HepG2 (cell line): ENCODE measurements at regions of chr6 and their contacts with region 1.

Region 1: DNA sequence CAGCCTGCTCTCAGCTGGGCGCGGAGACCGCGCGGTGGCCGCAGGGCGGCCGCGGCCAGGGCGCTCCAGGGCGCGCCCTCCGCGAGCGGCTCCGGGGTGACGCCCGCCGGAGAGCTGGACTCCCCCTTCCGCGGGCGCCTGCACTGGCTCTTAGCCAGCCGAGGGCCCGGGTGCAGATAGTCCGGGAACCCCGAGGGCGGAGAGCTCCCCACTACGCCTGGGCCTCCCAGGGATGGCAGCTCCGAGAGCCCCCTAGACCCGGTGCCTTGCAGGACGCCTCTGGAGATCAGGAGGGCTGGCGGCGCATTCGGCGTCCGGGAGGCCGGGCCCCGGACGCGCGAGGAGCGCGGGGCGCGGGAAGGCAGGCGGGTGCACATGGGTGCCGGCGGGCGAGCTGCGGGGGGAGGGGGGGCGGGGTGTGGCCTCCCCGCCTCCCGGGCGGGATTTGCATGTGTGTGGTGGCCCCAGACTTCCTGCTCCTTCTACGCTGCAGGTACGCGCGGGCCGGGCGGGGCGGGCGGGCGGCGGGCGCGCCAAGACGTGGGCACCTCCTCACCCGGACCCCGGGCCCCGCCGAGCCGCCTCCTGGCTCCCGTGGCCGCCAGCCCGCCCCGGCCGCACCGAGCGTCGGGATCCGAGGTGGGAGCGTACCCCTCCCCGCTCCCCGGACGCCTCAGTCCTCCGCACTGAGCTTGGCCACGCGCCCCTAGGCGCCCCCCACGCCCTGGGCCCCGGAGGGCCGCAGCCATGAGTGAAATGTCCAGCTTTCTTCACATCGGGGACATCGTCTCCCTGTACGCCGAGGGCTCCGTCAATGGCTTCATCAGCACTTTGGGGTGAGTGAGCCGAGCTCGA is at the start of gene ITPR3:
- DNase-seq: no peak
- ATAC-seq: peak; percentile 75
- H3K4me3 ChIP-seq: peak within 1 kb of the TSS; percentile 80 to 86 (median 82)
- H3K27ac ChIP-seq: no peak within 1 kb of the TSS
- H3K4me1 ChIP-seq: peaks cover 52% of the 10 kb centered on the region
- H3K27me3 ChIP-seq: peaks cover 0 to 15% of the 10 kb centered on the region in 2 experiments; a peak in 3 of 5 replicates
- CTCF ChIP-seq: no peak
- EP300 ChIP-seq: no peak
- POLR2A ChIP-seq: no peak
- RAD21 ChIP-seq: no peak
- total RNA-seq, gene ITPR3: 3.4 and 3.8 TPM in 2 replicates

Region 2: DNA sequence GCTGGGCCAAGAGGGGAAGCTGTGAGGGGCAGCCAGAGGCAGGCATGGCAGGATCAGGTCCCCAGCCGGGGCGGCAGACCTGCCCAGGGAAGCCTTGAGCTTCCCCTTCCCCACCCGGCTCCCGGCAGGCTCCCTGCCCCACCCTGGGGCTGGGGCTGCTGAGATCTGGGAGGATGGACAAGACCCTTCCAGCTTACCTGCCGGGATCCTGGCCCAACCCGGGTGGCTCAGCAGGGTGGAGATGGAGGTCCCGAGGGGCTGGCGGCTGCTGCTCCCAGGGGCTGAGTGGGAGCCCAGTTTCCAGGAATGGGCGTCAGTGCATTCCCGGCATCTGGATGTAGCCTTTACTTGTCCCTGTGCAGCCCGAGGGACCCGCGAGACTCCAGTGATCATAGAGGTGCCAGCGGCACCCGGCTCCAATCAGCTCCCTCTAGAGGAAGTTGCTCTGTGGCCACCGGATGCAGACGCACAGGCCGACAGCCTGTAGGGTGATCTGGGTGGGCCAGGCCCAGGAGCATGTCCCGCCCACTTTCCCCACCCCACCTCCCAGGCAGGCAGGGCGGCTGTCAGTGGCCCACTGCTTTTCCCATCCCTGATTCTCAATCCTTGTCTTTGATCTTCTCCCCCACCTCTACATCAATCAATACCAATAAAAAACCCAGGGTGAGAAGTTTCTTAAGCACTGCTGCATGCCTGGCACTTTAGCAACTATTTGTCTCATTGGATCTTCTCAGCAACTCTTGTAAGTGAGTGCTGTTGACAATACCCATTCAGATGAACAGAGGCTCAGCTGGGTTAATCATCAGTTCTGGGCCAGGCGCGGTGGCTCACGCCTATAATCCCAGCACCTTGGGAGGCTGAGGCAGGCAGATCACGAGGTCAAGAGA is 41.0 kb before region 1 on chr6 and contains the start of gene BAK1:
- CTCF ChIA-PET with region 1: no interaction called
- POLR2A ChIA-PET with region 1: interaction called, 10 read pairs
- in situ Hi-C with region 1: loop called (anchors 5 kb)
- intact Hi-C with region 1: no loop called
- DNase-seq: peak; percentile 93
- ATAC-seq: peak; percentile 97
- H3K4me3 ChIP-seq: peak within 1 kb of the TSS; percentile 77 to 91 (median 83)
- H3K27ac ChIP-seq: peak within 1 kb of the TSS; percentile 48
- H3K4me1 ChIP-seq: peaks cover 34% of the 10 kb centered on the region
- H3K27me3 ChIP-seq: no peaks in the 10 kb centered on the region
- CTCF ChIP-seq: peak; percentile 91
- EP300 ChIP-seq: no peak
- POLR2A ChIP-seq: peak; percentile 63 to 72; a peak in 3 of 4 replicates
- RAD21 ChIP-seq: peak; percentile 66
- total RNA-seq, gene BAK1: 23.8 and 25.9 TPM in 2 replicates

Region 3: GRCh38 chr6:33607784-33608161 is 13.3 kb before region 1 on chr6:
- CTCF ChIA-PET with region 1: no interaction called
- POLR2A ChIA-PET with region 1: interaction called, 11 read pairs
- in situ Hi-C with region 1: no loop called
- intact Hi-C with region 1: no loop called
- DNase-seq: peak; percentile 79
- ATAC-seq: peak; percentile 44
- H3K4me3 ChIP-seq: no peak overlapping the region
- H3K27ac ChIP-seq: no peak overlapping the region
- H3K4me1 ChIP-seq: peaks cover 68% of the 10 kb centered on the region
- H3K27me3 ChIP-seq: no peaks in the 10 kb centered on the region; a peak in 1 of 5 replicates
- CTCF ChIP-seq: peak; percentile 76
- EP300 ChIP-seq: no peak
- POLR2A ChIP-seq: no peak
- RAD21 ChIP-seq: peak; percentile 64

Region 4: DNA sequence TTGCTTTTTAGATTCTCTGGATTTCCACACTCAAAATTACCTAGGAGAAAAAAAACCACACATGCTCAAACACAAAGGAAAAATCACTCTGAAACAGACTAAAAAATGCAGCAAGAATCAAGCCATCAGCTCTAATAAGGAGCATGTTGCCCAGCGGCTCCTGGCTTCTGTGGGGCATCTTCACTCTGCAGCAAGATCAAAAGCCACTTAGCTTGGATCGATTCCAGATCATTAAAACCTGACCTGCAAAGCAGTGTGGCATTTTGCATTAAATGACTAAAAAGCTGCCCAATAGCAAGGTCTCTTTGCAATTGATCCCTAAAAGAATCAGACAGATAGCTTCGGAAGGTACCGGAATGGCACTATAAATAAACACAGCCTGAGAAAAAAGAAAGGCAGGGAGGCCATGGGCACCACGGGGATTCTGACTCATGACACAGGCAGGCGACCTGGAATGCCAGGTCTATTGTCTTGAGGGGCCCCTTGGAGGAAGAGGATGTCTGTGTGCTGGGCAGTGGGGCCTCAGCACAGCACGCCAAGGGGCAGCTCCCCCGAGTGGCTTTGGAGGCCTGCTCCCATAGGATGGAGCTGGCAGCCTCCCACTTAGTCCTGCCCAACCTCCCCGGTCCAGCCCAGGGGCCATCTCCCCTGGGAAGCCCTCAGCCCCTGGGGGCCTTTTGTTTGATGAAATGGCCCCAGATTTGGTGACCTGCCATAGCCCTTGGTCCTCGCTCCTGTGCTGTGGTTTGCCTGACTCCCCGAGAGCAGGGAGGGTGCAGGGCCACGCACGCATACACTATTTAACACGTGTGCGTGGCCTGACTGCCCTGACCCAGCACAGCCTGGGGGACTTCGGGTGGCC is 160.3 kb after region 1 on chr6:
- CTCF ChIA-PET with region 1: no interaction called
- POLR2A ChIA-PET with region 1: no interaction called
- in situ Hi-C with region 1: no loop called
- intact Hi-C with region 1: no loop called
- DNase-seq: no peak
- ATAC-seq: no peak
- H3K4me3 ChIP-seq: no peak overlapping the region
- H3K27ac ChIP-seq: no peak overlapping the region
- H3K4me1 ChIP-seq: peaks cover 6% of the 10 kb centered on the region
- H3K27me3 ChIP-seq: no peaks in the 10 kb centered on the region
- CTCF ChIP-seq: no peak
- EP300 ChIP-seq: no peak
- POLR2A ChIP-seq: no peak
- RAD21 ChIP-seq: no peak

Region 5: DNA sequence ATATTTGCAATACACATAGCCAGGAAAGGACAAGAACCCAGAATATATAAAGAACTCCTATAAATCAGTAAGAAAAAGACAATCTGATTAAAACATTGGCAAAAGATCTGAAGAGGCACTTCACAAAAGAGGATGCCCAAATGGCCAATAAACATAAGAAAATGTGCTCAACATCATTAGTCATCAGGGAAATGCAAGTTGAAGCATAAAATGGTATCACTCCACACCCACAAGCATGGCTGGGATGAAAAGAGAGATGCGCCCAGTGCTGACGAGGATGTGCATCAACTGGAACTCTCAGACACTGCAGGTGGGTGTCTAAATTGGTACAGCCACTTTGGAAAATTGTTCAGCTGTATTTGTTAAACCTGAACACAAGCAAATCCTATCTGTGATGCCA is 225.1 kb after region 1 on chr6:
- CTCF ChIA-PET with region 1: no interaction called
- POLR2A ChIA-PET with region 1: no interaction called
- in situ Hi-C with region 1: no loop called
- intact Hi-C with region 1: no loop called
- DNase-seq: no peak
- ATAC-seq: no peak
- H3K4me3 ChIP-seq: no peak overlapping the region
- H3K27ac ChIP-seq: no peak overlapping the region
- H3K4me1 ChIP-seq: peaks cover 13% of the 10 kb centered on the region
- H3K27me3 ChIP-seq: peaks cover 2 to 41% of the 10 kb centered on the region in 2 experiments; a peak in 4 of 5 replicates
- CTCF ChIP-seq: no peak
- EP300 ChIP-seq: no peak
- POLR2A ChIP-seq: no peak
- RAD21 ChIP-seq: no peak